Naive thymus-derived CD4-positive, alpha-beta T cell (primary cell): ENCODE measurements at regions of chr14 and their contacts with region 1.

Region 1: GRCh38 chr14:73295198-73295796 is 58.0 kb downstream of the PAPLN start:
- DNase-seq: peak in 5 of 9 donors; percentile 27 to 53 (median 43)
- ATAC-seq: peak; percentile 70
- H3K4me3 ChIP-seq: no peak overlapping the region
- H3K4me3 Mint-ChIP-seq: no peak overlapping the region
- H3K27ac ChIP-seq: no peak overlapping the region
- H3K27ac Mint-ChIP-seq: no peak overlapping the region
- H3K4me1 ChIP-seq: no peaks in the 10 kb centered on the region
- H3K4me1 Mint-ChIP-seq: peaks cover 0 to 18% (median 0%) of the 10 kb centered on the region in 7 donors
- H3K27me3 ChIP-seq: no peaks in the 10 kb centered on the region
- H3K27me3 Mint-ChIP-seq: no peaks in the 10 kb centered on the region

Region 2: DNA sequence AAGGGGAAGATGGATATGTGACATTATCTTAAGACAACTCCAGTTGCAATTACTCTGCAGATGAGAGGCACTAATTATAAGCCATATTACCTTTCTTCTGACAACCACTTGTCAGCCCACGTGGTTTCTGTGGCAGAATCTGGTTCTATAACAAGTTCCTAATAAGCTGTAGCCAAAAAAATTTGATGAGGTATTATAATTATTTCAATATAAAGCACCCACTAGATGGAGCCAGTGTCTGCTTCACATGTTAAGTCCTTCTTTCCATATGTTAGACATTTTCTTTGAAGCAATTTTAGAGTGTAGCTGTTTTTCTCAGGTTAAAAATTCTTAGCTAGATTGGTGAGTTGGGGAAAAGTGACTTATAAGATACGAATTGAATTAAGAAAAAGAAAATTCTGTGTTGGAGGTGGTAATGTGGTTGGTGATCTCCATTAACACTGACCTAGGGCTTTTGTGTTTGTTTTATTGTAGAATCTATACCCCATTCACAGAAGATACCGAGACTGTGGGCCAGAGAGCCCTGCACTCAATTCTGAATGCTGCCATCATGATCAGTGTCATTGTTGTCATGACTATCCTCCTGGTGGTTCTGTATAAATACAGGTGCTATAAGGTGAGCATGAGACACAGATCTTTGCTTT is 122.1 kb before region 1 on chr14:
- CTCF ChIA-PET with region 1: no interaction called
- POLR2A ChIA-PET with region 1: no interaction called
- intact Hi-C with region 1: loop called in 1 of 2 experiments (anchors 5 kb)
- DNase-seq: peak in 5 of 9 donors; percentile 4 to 25 (median 8)
- ATAC-seq: peak; percentile 57
- H3K4me3 ChIP-seq: no peak overlapping the region
- H3K4me3 Mint-ChIP-seq: no peak overlapping the region
- H3K27ac ChIP-seq: no peak overlapping the region
- H3K27ac Mint-ChIP-seq: peak overlapping the region in 3 of 9 donors; percentile 21 to 25 (median 24)
- H3K4me1 ChIP-seq: no peaks in the 10 kb centered on the region
- H3K4me1 Mint-ChIP-seq: peaks cover 0 to 9% (median 0%) of the 10 kb centered on the region in 7 donors
- H3K27me3 ChIP-seq: no peaks in the 10 kb centered on the region
- H3K27me3 Mint-ChIP-seq: no peaks in the 10 kb centered on the region

Region 3: GRCh38 chr14:73307261-73307660 is 12.0 kb after region 1 on chr14:
- CTCF ChIA-PET with region 1: interaction called, 10 read pairs
- POLR2A ChIA-PET with region 1: no interaction called
- intact Hi-C with region 1: no loop called
- DNase-seq: no peak
- ATAC-seq: no peak
- H3K4me3 ChIP-seq: no peak overlapping the region
- H3K4me3 Mint-ChIP-seq: no peak overlapping the region
- H3K27ac ChIP-seq: no peak overlapping the region
- H3K27ac Mint-ChIP-seq: peak overlapping the region in 1 of 9 donors; percentile 36
- H3K4me1 ChIP-seq: no peaks in the 10 kb centered on the region
- H3K4me1 Mint-ChIP-seq: peaks cover 5 to 15% (median 9%) of the 10 kb centered on the region in 7 donors
- H3K27me3 ChIP-seq: no peaks in the 10 kb centered on the region
- H3K27me3 Mint-ChIP-seq: no peaks in the 10 kb centered on the region

Region 4: GRCh38 chr14:73472185-73473114 is 177.2 kb after region 1 on chr14:
- CTCF ChIA-PET with region 1: interaction called, 117 read pairs
- POLR2A ChIA-PET with region 1: interaction called, 3 read pairs
- intact Hi-C with region 1: loop called (anchors 1 kb)
- DNase-seq: peak in 7 of 9 donors; percentile 37 to 71 (median 54)
- ATAC-seq: peak; percentile 84
- H3K4me3 ChIP-seq: no peak overlapping the region
- H3K4me3 Mint-ChIP-seq: no peak overlapping the region
- H3K27ac ChIP-seq: no peak overlapping the region
- H3K27ac Mint-ChIP-seq: no peak overlapping the region
- H3K4me1 ChIP-seq: no peaks in the 10 kb centered on the region
- H3K4me1 Mint-ChIP-seq: peaks cover 0 to 11% (median 4%) of the 10 kb centered on the region in 7 donors
- H3K27me3 ChIP-seq: no peaks in the 10 kb centered on the region
- H3K27me3 Mint-ChIP-seq: no peaks in the 10 kb centered on the region